OCI-LY7 (cell line): ENCODE measurements at regions of chr4 and their contacts with region 1.

Region 1: DNA sequence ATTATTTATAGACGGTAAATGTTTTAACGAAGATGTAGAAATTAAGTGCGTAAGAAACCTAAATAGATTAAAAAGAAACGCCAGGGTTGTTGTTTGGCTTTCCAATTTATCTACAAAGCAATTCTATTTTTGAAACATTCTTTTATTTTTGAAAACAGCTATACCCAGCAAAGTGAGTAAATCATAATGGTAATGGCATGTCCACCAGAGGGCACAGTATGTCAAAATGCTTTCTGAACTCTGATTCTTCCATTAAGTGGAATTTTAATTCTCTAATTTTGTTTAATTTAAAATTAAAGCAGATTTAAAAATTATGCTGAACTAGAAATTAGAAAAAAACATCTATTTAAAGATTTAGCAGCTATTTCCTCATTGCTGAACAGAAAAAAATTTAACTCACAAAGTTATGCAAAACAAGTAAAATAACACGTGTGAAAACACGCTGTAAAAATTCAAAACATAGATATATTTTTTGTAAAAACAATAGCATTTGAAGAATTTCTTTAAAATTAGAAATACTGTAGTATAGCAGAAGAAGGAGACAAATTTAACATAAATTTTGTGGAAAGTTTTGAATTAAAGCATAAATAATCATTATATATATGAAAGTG is 26.5 kb downstream of the RASSF6 start:
- DNase-seq: peak; percentile 61
- H3K4me3 ChIP-seq: no peak overlapping the region
- H3K27ac ChIP-seq: peak overlapping the region; percentile 100
- H3K4me1 ChIP-seq: peaks cover 97% of the 10 kb centered on the region
- CTCF ChIP-seq: peak; percentile 97

Region 2: DNA sequence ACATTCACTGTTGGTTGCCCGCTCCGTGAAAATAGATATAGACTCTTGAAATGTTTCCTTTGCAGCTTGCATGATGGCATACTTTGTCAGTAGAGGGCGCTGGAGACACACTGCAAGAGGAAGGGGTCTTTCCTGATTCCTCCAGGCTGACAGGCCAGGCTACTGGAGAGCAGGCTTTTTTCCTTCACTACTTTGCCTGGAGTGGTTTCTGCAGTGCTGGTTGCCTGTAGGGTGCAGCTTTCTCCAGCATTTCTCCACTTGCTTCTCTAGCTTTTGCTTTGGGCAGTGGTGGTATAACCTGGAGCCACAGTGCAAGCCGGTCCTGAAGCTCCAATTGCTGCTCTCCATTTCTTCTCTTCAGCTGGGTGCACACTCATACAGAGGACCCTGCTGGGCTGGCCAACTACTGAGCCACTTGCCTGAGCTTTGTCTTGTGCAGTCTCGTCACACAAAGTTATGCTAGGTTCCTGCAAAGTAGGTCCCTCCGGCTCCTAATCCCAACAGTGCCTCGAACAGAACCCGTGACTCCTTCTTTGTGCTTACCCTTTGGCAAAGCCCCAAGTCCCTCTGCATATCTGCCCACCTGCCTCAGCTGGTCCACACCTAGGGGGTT is 19.8 kb before region 1 on chr4:
- CTCF ChIA-PET with region 1: interaction called, 5 read pairs
- POLR2A ChIA-PET with region 1: interaction called, 14 read pairs
- intact Hi-C with region 1: no loop called
- DNase-seq: peak; percentile 86
- H3K4me3 ChIP-seq: no peak overlapping the region
- H3K27ac ChIP-seq: peak overlapping the region; percentile 54
- H3K4me1 ChIP-seq: peaks cover 20% of the 10 kb centered on the region
- CTCF ChIP-seq: peak; percentile 99

Region 3: DNA sequence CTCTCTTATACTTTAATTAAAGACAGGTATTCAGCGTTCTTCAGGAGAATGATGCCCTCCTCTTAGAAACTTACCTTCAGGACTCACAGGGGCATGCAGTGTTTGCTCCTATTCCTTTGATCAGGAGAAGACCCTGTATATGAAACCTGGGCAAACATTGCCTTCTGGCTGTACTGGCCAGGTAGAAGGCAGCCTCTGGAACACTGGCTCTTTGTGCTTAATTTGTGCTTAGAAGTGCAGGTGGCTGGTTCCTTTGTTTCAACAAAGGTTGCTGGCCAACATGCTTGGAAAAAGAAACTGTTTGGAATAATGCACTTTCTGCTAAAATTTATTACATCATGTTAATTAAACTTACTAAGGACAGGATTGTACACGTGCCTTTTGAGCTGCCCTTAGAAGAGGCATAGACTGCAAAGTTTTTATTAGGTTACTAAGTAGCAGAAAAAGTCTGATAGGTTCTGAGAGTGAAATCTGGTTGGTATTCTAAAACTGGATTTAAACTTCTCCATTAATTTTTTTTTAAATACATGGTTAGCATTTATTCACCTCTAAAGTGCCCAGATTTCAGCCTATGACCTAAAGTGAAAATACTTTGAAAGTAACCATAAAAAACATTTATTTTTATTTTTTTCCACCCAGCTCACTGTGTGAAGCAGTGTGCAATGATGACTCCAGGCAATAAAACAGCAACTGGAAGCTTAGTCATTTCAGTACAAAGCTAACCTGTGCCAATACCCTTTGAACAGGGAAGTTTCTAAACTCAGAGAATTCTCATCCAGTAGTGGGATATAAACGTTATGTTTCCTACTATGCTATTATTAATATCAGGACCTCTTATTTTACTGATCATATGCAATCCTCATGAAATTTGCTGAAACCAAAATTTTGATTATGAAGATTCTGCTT is 15.2 kb after region 1 on chr4:
- CTCF ChIA-PET with region 1: interaction called, 4 read pairs
- POLR2A ChIA-PET with region 1: interaction called, 42 read pairs
- intact Hi-C with region 1: loop called (anchors 1 kb)
- DNase-seq: peak; percentile 38
- H3K4me3 ChIP-seq: peak overlapping the region; percentile 59
- H3K27ac ChIP-seq: peak overlapping the region; percentile 100
- H3K4me1 ChIP-seq: peaks cover 99% of the 10 kb centered on the region
- CTCF ChIP-seq: no peak

Region 4: GRCh38 chr4:73668782-73669201 is 75.1 kb after region 1 on chr4:
- CTCF ChIA-PET with region 1: no interaction called
- POLR2A ChIA-PET with region 1: no interaction called
- intact Hi-C with region 1: no loop called
- DNase-seq: no peak
- H3K4me3 ChIP-seq: no peak overlapping the region
- H3K27ac ChIP-seq: no peak overlapping the region
- H3K4me1 ChIP-seq: no peaks in the 10 kb centered on the region
- CTCF ChIP-seq: no peak

Region 5: DNA sequence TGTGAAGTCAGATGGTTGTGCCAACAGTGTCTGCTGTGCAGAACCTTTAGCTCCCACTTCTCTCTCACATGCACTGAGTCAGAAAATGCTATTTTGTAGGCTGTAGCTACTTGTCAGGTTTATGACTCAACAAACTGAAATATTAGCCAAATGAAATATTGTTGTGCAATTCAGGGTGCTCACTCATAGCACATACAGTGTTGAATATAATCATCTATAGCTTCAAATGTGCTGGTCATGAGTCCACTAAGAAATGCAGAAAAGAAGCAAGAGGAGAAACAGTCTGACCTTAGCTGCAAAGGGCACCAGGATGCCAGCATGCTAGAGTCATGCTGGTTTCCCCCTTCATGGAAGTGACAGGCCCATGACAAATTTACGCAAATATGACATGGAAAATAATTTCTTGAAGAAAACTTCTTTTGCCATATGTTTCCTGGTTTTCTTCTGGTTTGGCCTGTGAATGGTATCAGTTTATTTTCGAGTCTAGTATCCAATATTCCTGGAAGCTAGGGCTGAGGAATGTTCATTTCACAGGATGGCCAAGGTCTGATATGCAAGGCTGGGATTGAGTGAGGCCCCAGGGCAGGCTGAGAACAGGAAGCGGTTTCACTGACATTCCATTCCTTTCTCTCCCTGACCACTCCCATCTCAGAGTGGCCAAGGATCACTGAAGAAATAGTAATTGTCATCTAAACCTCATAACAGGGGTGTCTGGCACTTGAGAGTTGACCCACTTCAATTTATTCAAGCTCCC is 515.6 kb after region 1 on chr4:
- CTCF ChIA-PET with region 1: no interaction called
- POLR2A ChIA-PET with region 1: no interaction called
- intact Hi-C with region 1: no loop called
- DNase-seq: no peak
- H3K4me3 ChIP-seq: no peak overlapping the region
- H3K27ac ChIP-seq: no peak overlapping the region
- H3K4me1 ChIP-seq: no peaks in the 10 kb centered on the region
- CTCF ChIP-seq: no peak

Region 6: GRCh38 chr4:74157561-74158465 is 564.1 kb after region 1 on chr4 and contains the start of gene MTHFD2L:
- CTCF ChIA-PET with region 1: no interaction called
- POLR2A ChIA-PET with region 1: no interaction called
- intact Hi-C with region 1: loop called (anchors 10 kb)
- DNase-seq: peak; percentile 88
- H3K4me3 ChIP-seq: peak within 1 kb of the TSS; percentile 85
- H3K27ac ChIP-seq: peak within 1 kb of the TSS; percentile 35
- H3K4me1 ChIP-seq: peaks cover 14% of the 10 kb centered on the region
- CTCF ChIP-seq: no peak
- total RNA-seq, gene MTHFD2L: 18.5 and 18.9 TPM in 2 replicates